ENCODE measurements at regions of chr6 and their contacts with region 1.

Region 1: GRCh38 chr6:28443112-28443773 is at the start of gene ZSCAN23:
- DNase-seq: peak; percentile 91
- ATAC-seq: peak; percentile 92
- H3K4me3 Mint-ChIP-seq: peak within 1 kb of the TSS; percentile 96
- H3K27ac Mint-ChIP-seq: peak within 1 kb of the TSS; percentile 91
- H3K4me1 Mint-ChIP-seq: peaks cover 32% of the 10 kb centered on the region
- H3K27me3 Mint-ChIP-seq: peaks cover 16% of the 10 kb centered on the region
- total RNA-seq, gene ZSCAN23: 1.9 to 2.9 TPM

Region 2: GRCh38 chr6:27388293-27389197 is 1054.7 kb before region 1 on chr6 and contains the start of gene ZNF391:
- CTCF ChIA-PET with region 1: no interaction called
- POLR2A ChIA-PET with region 1: no interaction called
- intact Hi-C with region 1: loop called in 1 of 2 experiments (anchors 5 kb)
- DNase-seq: peak; percentile 81
- ATAC-seq: peak; percentile 95
- H3K4me3 Mint-ChIP-seq: peak within 1 kb of the TSS; percentile 95
- H3K27ac Mint-ChIP-seq: peak within 1 kb of the TSS; percentile 93
- H3K4me1 Mint-ChIP-seq: peaks cover 14% of the 10 kb centered on the region
- H3K27me3 Mint-ChIP-seq: peaks cover 6% of the 10 kb centered on the region
- total RNA-seq, gene ZNF391: 4.3 to 6.2 TPM

Region 3: DNA sequence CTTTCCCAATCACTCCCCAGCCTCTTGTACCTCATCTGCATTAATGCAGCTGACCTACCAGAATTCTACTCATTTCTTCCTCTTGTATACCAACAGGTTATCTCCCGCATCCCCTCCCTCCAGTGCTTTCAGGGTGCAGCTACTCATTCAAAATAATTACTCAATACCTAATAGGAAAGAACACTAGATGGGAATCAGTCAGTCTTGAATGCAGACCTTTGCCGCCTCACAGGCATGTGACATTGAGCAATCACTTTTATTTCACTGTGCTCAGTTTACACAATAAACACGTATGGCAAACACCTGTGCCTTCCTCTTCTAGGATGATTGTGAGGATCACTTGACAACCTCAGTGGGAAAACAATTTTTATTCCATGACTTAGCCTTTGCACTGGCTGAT is 120.6 kb before region 1 on chr6:
- CTCF ChIA-PET with region 1: no interaction called
- POLR2A ChIA-PET with region 1: no interaction called
- intact Hi-C with region 1: no loop called
- DNase-seq: no peak
- ATAC-seq: no peak
- H3K4me3 Mint-ChIP-seq: no peak overlapping the region
- H3K27ac Mint-ChIP-seq: no peak overlapping the region
- H3K4me1 Mint-ChIP-seq: no peaks in the 10 kb centered on the region
- H3K27me3 Mint-ChIP-seq: peaks cover 7% of the 10 kb centered on the region

Region 4: DNA sequence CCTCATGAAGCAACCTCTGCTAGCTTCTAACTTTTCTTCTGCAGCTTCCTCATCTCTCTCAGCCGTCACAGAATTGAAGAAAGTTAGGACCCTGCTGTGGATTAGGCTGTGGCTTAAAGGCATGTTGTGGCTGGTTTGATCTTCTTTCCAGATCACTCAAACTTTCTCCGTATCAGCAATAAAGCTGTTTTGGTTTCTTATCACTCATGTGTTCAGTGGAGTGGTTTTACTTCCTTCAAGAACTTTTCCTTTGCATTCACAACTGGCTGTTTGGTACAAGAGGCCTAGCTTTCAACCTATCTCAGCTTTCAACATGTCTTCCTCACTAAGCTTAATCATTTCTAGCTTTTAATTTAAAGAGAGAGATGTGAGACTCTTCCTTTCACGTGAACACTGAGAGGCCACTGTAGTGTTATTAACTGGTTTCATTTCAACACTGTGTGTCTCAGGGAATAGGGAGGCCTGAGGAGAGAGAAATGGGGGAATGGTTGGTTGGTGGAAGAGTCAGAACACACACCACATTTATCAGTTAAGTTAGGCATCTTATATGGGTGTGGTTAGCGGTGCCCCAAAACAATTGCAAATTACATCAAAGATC is 17.2 kb before region 1 on chr6:
- CTCF ChIA-PET with region 1: interaction called, 3 read pairs
- POLR2A ChIA-PET with region 1: interaction called, 3 read pairs
- intact Hi-C with region 1: loop called in 1 of 2 experiments (anchors 1 kb)
- DNase-seq: peak; percentile 20
- ATAC-seq: peak; percentile 88
- H3K4me3 Mint-ChIP-seq: no peak overlapping the region
- H3K27ac Mint-ChIP-seq: peak overlapping the region; percentile 38
- H3K4me1 Mint-ChIP-seq: peaks cover 17% of the 10 kb centered on the region
- H3K27me3 Mint-ChIP-seq: no peaks in the 10 kb centered on the region

Region 5: GRCh38 chr6:28489366-28490204 is 46.3 kb after region 1 on chr6:
- CTCF ChIA-PET with region 1: no interaction called
- POLR2A ChIA-PET with region 1: no interaction called
- intact Hi-C with region 1: loop called in 1 of 2 experiments (anchors 1 kb)
- DNase-seq: peak; percentile 80
- ATAC-seq: peak; percentile 80
- H3K4me3 Mint-ChIP-seq: peak overlapping the region; percentile 72
- H3K27ac Mint-ChIP-seq: peak overlapping the region; percentile 79
- H3K4me1 Mint-ChIP-seq: peaks cover 16% of the 10 kb centered on the region
- H3K27me3 Mint-ChIP-seq: peaks cover 44% of the 10 kb centered on the region

Measured in activated CD4-positive, alpha-beta T cell treated with anti-CD3 and anti-CD28 coated beads for 36 hours (primary cell).